ENCODE measurements at regions of chr11 and their contacts with region 1.

Region 1: DNA sequence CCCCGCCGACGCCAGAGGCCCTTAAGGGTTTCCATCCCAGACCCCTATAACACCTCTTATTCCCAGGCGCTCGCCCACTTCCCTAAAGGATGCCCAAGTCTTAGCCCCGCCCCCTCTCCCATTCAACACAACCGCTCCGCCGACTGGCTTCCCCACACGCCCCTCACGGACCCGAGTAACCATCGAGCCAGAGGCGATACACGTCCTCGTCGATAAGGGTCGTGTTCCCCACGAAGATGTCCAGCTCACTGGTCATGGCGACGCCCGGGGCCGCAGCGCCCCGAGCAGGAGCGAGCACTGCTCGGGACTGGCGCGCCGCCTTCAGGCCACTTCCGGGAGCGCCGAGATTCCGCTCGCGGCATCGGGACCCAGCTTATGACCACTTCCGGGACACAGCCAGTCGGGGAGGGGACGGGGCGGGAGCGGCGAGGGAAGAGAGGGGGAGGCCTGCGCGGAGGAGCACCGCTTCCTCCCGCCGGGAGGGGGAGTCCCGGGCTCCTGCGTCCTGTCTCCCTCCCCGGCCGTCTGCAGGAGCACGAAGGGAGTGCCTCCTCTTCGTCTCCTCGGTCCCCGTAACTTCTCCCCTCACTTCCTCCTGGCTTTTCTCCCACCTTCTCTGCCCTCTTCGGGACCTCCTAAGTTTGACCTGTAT is at the start of gene FIBP:
- DNase-seq: peak; percentile 98
- H3K4me3 Mint-ChIP-seq: peak within 1 kb of the TSS; percentile 97
- H3K27ac Mint-ChIP-seq: peak within 1 kb of the TSS; percentile 90
- H3K4me1 Mint-ChIP-seq: peaks cover 74% of the 10 kb centered on the region
- H3K27me3 Mint-ChIP-seq: no peaks in the 10 kb centered on the region
- total RNA-seq, gene FIBP: 71.7 to 77.4 TPM

Region 2: GRCh38 chr11:65630215-65630614 is 258.1 kb before region 1 on chr11:
- CTCF ChIA-PET with region 1: no interaction called
- POLR2A ChIA-PET with region 1: no interaction called
- DNase-seq: no peak
- H3K4me3 Mint-ChIP-seq: no peak overlapping the region
- H3K27ac Mint-ChIP-seq: no peak overlapping the region
- H3K4me1 Mint-ChIP-seq: peaks cover 24% of the 10 kb centered on the region
- H3K27me3 Mint-ChIP-seq: no peaks in the 10 kb centered on the region

Region 3: GRCh38 chr11:65711785-65712632 is 176.3 kb before region 1 on chr11 and contains the start of gene KAT5:
- CTCF ChIA-PET with region 1: interaction called, 23 read pairs
- POLR2A ChIA-PET with region 1: interaction called, 9 read pairs
- DNase-seq: peak; percentile 99
- H3K4me3 Mint-ChIP-seq: peak within 1 kb of the TSS; percentile 82
- H3K27ac Mint-ChIP-seq: peak within 1 kb of the TSS; percentile 95
- H3K4me1 Mint-ChIP-seq: peaks cover 42% of the 10 kb centered on the region
- H3K27me3 Mint-ChIP-seq: no peaks in the 10 kb centered on the region
- total RNA-seq, gene KAT5: 62.6 to 63.0 TPM

Region 4: DNA sequence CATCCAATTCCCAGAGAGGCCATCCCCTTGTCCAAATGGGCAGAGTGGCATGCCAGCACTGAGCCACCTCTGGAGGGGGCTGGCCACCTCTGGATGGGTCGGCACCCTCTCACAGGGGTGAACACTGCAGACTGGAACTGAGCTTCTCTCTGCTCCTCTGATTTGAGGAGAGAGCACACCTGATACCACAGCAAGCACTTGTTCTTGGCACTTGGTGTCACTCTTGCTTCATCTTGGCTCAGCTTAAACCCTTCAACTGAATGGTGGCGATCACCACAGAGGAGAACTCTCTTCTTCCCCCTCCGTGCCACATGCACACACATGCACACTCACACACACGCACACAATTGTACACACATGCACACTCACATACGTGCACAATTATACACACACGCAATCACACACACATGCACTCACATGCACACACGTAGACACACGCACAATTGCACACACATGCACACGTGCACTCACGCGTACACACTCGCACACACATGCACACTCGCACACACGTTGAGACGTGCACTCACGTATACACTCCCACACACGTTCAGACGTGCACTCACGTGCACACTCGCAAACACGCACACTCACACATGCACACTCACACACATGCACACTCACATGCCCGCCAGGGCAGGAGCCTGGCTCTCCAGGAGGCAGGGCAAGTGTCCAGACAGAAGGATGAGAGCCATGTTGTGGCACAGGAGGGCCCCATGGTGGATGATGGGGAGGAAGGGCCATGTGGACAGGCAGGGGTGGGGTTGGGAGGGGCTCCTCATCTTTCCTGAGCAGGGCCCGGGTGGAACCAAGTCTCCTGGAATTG is 78.0 kb before region 1 on chr11:
- CTCF ChIA-PET with region 1: no interaction called
- POLR2A ChIA-PET with region 1: no interaction called
- DNase-seq: no peak
- H3K4me3 Mint-ChIP-seq: no peak overlapping the region
- H3K27ac Mint-ChIP-seq: no peak overlapping the region
- H3K4me1 Mint-ChIP-seq: no peaks in the 10 kb centered on the region
- H3K27me3 Mint-ChIP-seq: peaks cover 30% of the 10 kb centered on the region

Region 5: GRCh38 chr11:65873318-65874156 is 14.8 kb before region 1 on chr11:
- CTCF ChIA-PET with region 1: interaction called, 82 read pairs
- POLR2A ChIA-PET with region 1: interaction called, 55 read pairs
- DNase-seq: peak; percentile 97
- H3K4me3 Mint-ChIP-seq: peak overlapping the region; percentile 85
- H3K27ac Mint-ChIP-seq: peak overlapping the region; percentile 68
- H3K4me1 Mint-ChIP-seq: peaks cover 43% of the 10 kb centered on the region
- H3K27me3 Mint-ChIP-seq: peaks cover 10% of the 10 kb centered on the region

Region 6: DNA sequence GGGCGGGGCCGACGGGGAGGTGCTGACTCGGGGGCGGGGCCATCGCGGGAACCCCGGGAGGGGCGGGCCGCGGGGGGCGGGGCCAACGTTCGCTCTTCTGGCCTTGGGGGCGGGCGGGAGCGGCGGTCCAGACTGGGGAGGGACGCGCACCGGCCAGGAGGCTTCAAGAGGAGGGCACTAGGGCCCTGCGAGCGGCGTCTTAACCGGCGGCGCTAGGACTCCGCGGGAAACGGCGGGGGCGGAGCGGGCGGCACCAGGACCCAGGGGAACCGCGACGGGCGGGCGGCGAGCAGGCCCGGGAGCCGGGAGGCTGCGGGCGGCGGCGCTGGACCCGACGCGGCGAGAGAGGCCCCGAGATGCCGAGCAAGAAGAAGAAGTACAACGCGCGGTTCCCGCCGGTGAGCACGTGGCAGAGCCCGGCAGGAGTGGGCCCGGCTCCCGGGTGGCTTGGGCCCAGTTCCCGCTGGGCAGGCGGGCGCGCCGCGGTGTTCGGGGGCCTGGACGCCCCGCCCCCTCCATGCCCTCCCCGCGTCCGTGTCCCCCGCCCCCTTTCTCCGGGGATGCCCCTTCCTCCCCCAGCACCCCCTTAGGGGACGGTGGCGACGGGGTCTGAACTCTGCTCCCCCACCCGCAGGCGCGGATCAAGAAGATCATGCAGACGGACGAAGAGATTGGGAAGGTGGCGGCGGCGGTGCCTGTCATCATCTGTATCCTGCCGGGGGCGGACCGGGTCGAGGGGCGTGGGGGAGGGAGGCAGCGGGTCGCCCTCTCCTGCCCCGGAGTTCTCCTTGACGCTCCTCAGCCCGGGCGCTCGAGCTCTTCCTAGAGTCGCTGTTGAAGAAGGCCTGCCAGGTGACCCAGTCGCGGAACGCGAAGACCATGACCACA is 31.1 kb after region 1 on chr11 and contains the start of gene DRAP1:
- CTCF ChIA-PET with region 1: interaction called, 18 read pairs
- POLR2A ChIA-PET with region 1: interaction called, 50 read pairs
- DNase-seq: peak; percentile 99
- H3K4me3 Mint-ChIP-seq: peak within 1 kb of the TSS; percentile 93
- H3K27ac Mint-ChIP-seq: peak within 1 kb of the TSS; percentile 87
- H3K4me1 Mint-ChIP-seq: peaks cover 42% of the 10 kb centered on the region
- H3K27me3 Mint-ChIP-seq: no peaks in the 10 kb centered on the region
- total RNA-seq, gene DRAP1: 162 to 180 TPM

Region 7: DNA sequence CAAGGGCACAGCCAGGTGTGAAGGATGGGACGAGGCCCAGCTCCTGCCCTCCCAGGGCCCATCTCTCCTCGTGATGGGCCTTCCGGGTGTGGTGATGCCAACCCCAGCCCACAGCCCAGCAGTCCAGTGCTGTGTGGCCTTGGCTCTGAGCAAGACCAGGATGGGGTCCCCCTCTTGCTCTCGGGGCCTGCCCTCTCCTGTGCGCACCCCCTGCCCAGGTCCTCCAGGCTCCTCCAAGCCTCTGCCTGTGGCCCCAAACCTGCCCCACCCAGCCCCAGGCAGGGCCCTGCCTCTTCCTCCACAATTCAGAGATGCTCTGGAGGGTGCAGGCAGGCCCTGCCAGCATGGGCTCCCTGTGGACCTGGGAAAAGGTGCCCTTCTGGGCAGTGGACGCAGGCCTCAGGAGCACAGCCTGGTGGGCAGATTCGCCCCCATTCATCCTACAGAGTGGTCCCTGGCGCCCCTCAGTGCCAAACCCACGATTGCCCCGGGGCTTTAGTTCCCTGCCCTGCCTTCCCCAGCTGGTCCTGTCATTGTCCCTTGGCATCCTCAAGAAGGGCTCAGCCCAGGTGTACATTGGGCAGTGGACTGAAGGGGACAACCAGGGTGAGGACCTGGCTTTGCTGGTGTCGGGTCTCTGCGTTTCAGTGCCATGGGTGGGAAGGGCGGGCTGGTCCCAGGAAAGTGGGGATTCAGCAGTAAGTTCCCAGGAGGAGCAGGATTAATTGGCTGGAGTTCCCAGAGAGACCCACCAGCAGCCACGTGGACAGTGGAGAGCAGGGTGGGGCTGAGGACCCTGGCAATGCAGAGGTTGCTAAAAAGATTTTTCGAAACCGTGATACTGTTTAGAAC is 93.9 kb after region 1 on chr11:
- CTCF ChIA-PET with region 1: interaction called, 44 read pairs
- POLR2A ChIA-PET with region 1: no interaction called
- DNase-seq: no peak
- H3K4me3 Mint-ChIP-seq: no peak overlapping the region
- H3K27ac Mint-ChIP-seq: no peak overlapping the region
- H3K4me1 Mint-ChIP-seq: no peaks in the 10 kb centered on the region
- H3K27me3 Mint-ChIP-seq: no peaks in the 10 kb centered on the region

Region 8: DNA sequence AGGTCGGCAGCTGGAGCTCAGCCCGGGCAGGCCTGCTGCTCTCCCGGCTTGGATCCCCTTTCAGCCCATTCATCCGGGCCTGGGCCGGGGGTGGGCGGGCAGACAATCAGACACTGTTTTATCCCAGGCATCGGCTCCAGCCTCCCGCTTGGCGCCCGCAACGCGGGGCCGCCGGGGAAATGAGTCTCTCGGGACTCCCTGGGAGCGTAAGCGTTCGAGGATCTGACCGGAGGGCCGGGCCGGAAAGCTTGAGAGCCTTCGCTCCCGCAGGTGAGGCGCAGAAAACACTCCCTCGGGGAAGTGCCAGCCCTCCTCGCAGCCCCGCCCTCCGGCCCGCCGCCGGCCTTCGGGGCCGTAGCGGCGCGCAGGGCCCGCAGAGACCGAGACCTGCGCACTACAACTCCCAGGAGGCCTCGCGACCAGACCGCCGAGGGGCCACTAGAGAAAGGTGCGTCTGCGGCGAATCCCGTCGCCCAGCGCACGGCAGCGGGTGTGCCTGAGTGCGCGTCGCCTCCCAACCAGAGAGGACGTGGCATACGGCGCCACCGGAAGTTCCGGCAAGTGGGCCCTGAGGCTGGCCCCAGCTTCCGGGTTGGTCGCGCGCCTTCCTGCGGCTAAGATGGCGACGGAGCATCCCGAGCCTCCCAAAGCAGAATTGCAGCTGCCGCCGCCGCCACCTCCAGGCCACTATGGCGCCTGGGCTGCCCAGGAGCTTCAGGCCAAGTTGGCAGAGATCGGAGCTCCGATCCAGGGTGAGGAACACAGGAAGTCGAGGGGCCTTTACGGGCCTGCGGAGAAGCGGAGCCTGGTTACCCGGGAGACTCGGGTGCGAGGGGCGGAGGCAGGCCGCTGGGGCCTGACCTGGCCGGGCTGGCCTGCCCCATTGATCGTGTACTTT is 163.7 kb after region 1 on chr11 and contains the start of gene SF3B2:
- CTCF ChIA-PET with region 1: interaction called, 13 read pairs
- POLR2A ChIA-PET with region 1: interaction called, 8 read pairs
- DNase-seq: peak; percentile 98
- H3K4me3 Mint-ChIP-seq: peak within 1 kb of the TSS; percentile 100
- H3K27ac Mint-ChIP-seq: peak within 1 kb of the TSS; percentile 96
- H3K4me1 Mint-ChIP-seq: peaks cover 37% of the 10 kb centered on the region
- H3K27me3 Mint-ChIP-seq: peaks cover 2% of the 10 kb centered on the region
- total RNA-seq, gene SF3B2: 230 to 241 TPM